ENCODE measurements at regions of chr16 and their contacts with region 1.

Region 1: DNA sequence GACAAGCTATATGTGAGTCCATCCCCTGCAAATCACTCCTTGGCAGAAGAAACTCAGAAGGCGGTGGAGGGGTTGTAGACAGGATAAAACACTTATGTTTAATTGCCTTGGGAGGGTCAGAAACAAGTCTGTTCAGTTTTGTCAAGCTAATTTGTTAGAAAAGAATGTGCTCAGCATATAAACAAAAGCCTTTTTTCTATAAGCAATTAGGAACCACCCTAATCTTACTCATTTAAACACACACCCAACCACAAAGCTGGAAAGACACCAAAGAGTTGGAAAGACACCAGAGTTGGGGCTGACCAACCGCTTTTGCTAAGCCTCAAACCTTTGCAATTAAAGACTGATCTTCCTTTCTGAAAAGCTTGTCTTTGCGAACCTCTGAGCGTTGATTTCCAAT is 439.2 kb upstream of the ERCC4 start:
- H3K4me3 Mint-ChIP-seq: no peak overlapping the region
- H3K27ac Mint-ChIP-seq: no peak overlapping the region
- H3K4me1 Mint-ChIP-seq: no peaks in the 10 kb centered on the region
- H3K27me3 Mint-ChIP-seq: no peaks in the 10 kb centered on the region

Region 2: GRCh38 chr16:13098536-13099127 is 382.2 kb before region 1 on chr16:
- intact Hi-C with region 1: no loop called
- H3K4me3 Mint-ChIP-seq: no peak overlapping the region
- H3K27ac Mint-ChIP-seq: no peak overlapping the region
- H3K4me1 Mint-ChIP-seq: no peaks in the 10 kb centered on the region
- H3K27me3 Mint-ChIP-seq: no peaks in the 10 kb centered on the region

Region 3: GRCh38 chr16:13426269-13426668 is 54.5 kb before region 1 on chr16:
- intact Hi-C with region 1: loop called (anchors 10 kb)
- H3K4me3 Mint-ChIP-seq: no peak overlapping the region
- H3K27ac Mint-ChIP-seq: no peak overlapping the region
- H3K4me1 Mint-ChIP-seq: peaks cover 12% of the 10 kb centered on the region
- H3K27me3 Mint-ChIP-seq: no peaks in the 10 kb centered on the region

Region 4: GRCh38 chr16:13529193-13529982 is 48.6 kb after region 1 on chr16:
- intact Hi-C with region 1: no loop called
- H3K4me3 Mint-ChIP-seq: no peak overlapping the region
- H3K27ac Mint-ChIP-seq: no peak overlapping the region
- H3K4me1 Mint-ChIP-seq: no peaks in the 10 kb centered on the region
- H3K27me3 Mint-ChIP-seq: no peaks in the 10 kb centered on the region